ENCODE measurements at regions of chr19 and their contacts with region 1.

Region 1: GRCh38 chr19:17579661-17580244 is 24.3 kb downstream of the COLGALT1 start:
- DNase-seq: peak in 1 of 2 donors; percentile 36
- ATAC-seq: peak in 1 of 2 donors; percentile 56
- H3K4me3 ChIP-seq: no peak overlapping the region
- H3K27ac ChIP-seq: no peak overlapping the region
- H3K4me1 ChIP-seq: no peaks in the 10 kb centered on the region
- H3K27me3 ChIP-seq: no peaks in the 10 kb centered on the region
- CTCF ChIP-seq: no peak
- POLR2A ChIP-seq: no peak

Region 2: DNA sequence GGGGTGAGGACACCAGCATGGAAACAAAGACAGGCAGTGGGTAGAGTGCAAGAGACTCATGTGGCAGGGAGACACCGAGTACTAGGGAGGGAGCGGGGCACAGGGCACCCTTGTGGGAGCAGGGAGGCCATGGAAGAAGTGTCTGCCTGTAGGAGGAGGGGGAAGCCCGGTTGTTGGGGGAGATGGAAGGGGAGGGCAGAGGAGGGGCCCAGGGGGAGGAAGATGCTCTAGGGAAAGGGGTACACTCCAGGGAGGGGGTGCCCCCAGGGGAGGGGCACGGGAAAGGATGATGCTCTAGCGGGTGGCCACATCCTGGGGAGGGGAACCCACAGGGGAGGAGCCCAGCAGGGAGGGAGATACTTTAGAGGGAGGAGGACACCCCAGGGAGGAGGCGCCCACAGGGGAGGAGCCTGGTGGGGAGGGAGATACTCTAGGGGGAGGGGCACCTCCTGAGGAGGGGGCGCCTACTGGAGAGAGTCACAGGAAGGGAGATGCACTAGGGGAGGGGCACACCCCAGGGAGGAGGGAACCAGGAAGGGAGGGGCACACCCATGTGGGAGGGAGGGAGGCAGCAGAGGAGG is 578.1 kb before region 1 on chr19:
- in situ Hi-C with region 1: no loop called
- intact Hi-C with region 1: no loop called
- DNase-seq: no peak
- ATAC-seq: no peak
- H3K4me3 ChIP-seq: no peak overlapping the region
- H3K27ac ChIP-seq: no peak overlapping the region
- H3K4me1 ChIP-seq: no peaks in the 10 kb centered on the region
- H3K27me3 ChIP-seq: no peaks in the 10 kb centered on the region
- CTCF ChIP-seq: no peak
- POLR2A ChIP-seq: no peak

Region 3: GRCh38 chr19:17448131-17448967 is 131.4 kb before region 1 on chr19 and contains the start of gene TMEM221:
- in situ Hi-C with region 1: loop called in 1 of 4 experiments (anchors 10 kb)
- intact Hi-C with region 1: loop called (anchors 1 kb)
- DNase-seq: peak in 1 of 2 donors; percentile 24
- ATAC-seq: no peak
- H3K4me3 ChIP-seq: peak within 1 kb of the TSS; percentile 35 to 54 (median 43)
- H3K27ac ChIP-seq: no peak within 1 kb of the TSS
- H3K4me1 ChIP-seq: peaks cover 5 to 7% of the 10 kb centered on the region in 2 donors
- H3K27me3 ChIP-seq: peaks cover 12 to 40% (median 15%) of the 10 kb centered on the region in 3 donors
- CTCF ChIP-seq: peak in 2 of 5 experiments; percentile 30 to 47
- POLR2A ChIP-seq: no peak
- total RNA-seq, gene TMEM221: not detected

Region 4: GRCh38 chr19:17496337-17496997 is 83.3 kb before region 1 on chr19:
- in situ Hi-C with region 1: no loop called
- intact Hi-C with region 1: loop called (anchors 1 kb)
- DNase-seq: peak in 1 of 2 donors; percentile 61
- ATAC-seq: peak; percentile 64 to 78
- H3K4me3 ChIP-seq: no peak overlapping the region
- H3K27ac ChIP-seq: peak overlapping the region in 1 of 4 donors; percentile 54
- H3K4me1 ChIP-seq: peaks cover 0 to 7% of the 10 kb centered on the region in 2 donors
- H3K27me3 ChIP-seq: no peaks in the 10 kb centered on the region
- CTCF ChIP-seq: peak; percentile 77 to 91 (median 89)
- POLR2A ChIP-seq: no peak

Region 5: DNA sequence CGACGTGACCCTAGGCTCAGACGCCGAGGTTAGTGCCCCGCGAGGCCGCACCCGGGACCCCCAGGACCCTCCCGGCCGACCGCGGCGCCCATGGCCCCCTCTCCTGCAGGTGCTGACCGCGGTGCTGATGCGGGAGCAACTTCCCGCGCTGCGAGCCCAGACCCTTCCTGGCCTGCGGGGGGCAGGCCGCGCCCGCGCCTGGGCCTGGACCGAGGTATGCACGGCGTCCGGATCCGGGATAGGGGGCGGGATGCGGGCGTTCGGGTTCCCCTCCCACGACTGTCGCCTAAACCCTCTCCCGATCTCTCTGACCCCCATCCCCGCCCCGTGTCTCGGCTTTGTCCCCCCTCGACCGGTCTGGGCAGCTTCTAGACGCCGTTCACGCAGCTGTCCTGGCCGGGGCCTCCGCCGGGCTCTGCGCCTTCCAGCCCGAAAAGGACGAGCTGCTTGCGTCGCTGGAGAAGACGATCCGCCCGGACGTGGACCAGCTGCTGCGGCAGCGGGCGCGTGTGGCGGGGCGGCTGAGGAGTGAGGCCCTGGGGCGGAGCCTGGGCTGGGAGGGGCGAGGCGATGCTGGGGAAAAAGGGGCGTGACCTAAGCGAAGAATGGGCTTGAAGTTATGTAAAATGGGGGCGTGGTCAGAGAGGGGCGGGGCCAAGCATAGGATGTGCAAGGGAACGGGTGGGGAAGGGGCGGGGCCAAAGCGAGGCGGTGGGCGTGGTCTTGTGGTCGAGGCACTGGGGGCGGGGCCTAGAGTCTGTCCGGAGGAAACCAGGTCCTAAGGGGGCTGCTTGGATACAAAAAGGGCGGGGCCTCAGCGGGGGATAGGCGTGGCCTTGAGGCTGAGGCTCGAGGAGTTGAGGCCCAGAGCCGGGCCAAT is 40.3 kb before region 1 on chr19:
- in situ Hi-C with region 1: no loop called
- intact Hi-C with region 1: loop called (anchors 2 kb)
- DNase-seq: peak; percentile 78 to 94
- ATAC-seq: peak; percentile 86 to 93
- H3K4me3 ChIP-seq: peak overlapping the region; percentile 52 to 74 (median 58)
- H3K27ac ChIP-seq: peak overlapping the region; percentile 45 to 63 (median 54)
- H3K4me1 ChIP-seq: peaks cover 6 to 7% of the 10 kb centered on the region in 2 donors
- H3K27me3 ChIP-seq: peaks cover 21 to 31% (median 24%) of the 10 kb centered on the region in 3 donors
- CTCF ChIP-seq: peak in 4 of 5 experiments; percentile 31 to 59 (median 52)
- POLR2A ChIP-seq: no peak

Region 6: DNA sequence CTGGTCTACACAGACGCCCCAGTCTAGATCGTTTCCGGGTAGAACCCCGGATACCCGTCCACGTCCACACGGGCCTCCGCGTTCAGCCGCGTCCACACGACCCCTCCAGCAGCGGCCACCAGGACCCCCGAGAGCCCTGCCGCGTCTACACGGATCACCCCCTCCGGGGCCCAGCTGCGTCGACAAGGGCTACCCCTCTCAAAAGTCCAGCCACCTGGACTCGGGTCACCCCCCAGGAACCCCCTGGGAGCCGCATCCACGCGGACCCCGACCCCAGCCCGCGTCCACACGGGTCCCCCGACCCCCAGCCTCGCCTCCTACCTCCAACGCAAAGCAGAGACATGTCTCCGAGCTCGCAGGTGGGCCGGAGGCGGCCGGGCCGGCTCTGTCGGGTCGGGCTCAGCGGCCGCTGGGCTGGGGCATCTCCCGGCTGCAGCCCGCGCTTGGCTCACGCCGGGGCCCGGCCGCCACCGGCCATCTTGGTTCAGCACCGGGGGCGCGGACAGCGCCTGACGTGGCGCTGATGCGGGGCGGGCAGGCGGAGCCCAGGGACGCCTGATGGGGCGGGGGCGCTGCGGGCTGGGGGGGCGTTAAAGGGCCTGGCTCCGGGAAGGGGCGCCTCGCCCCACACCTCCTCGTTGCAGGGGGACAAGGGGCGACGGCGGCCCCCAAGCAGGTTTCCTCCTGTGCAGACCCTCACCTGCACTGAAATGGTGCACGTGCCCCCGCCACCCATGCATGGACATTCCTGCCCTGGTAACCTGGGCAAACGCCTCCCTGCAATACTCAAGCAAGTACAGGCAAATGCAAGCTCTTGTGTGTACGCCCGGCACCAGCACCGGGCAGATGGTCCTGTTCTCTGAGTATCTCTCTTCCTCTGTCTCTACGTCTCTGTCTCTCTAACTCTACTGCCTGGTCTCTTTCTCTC is 108.4 kb after region 1 on chr19 and contains the start of gene UNC13A:
- in situ Hi-C with region 1: no loop called
- intact Hi-C with region 1: no loop called
- DNase-seq: no peak
- ATAC-seq: no peak
- H3K4me3 ChIP-seq: no peak within 1 kb of the TSS
- H3K27ac ChIP-seq: no peak within 1 kb of the TSS
- H3K4me1 ChIP-seq: peaks cover 0 to 5% of the 10 kb centered on the region in 2 donors
- H3K27me3 ChIP-seq: peaks cover 38 to 80% (median 54%) of the 10 kb centered on the region in 3 donors
- CTCF ChIP-seq: no peak
- POLR2A ChIP-seq: no peak
- total RNA-seq, gene UNC13A: not detected

Measured in gastrocnemius medialis (tissue), 4 donors.